PC-9 (cell line): ENCODE measurements at regions of chr2 and their contacts with region 1.

Region 1: GRCh38 chr2:70357684-70358071 is 55.8 kb upstream of the FAM136A start:
- DNase-seq: peak; percentile 65 to 75
- H3K4me3 ChIP-seq: no peak overlapping the region
- H3K27ac ChIP-seq: peak overlapping the region; percentile 70
- H3K4me1 ChIP-seq: peaks cover 60% of the 10 kb centered on the region
- H3K27me3 ChIP-seq: no peaks in the 10 kb centered on the region
- CTCF ChIP-seq: no peak

Region 2: DNA sequence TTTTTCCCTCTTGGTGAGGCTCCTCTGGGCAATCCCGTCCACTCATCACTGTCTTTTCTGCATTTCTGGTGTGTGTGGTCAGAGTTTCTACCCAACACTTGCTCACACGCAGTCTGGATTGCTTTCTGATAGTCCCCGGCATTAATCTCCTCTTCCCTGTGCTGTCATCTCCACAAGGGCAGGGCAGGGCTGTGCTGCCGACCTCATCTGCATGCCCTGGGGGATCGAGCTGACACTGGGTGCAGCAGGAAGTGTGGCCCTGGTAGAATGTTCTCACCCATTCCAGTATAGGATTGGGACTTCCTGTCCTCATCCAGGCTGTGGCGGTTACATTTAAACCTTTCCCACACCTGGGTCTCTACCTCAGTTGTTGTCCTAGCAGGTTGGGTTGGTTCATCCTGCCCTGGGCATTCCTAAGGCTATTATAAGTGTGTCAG is 24.2 kb after region 1 on chr2:
- CTCF ChIA-PET with region 1: no interaction called
- POLR2A ChIA-PET with region 1: interaction called, 3 read pairs
- intact Hi-C with region 1: loop called (anchors 1 kb)
- DNase-seq: peak; percentile 85 to 97
- H3K4me3 ChIP-seq: peak overlapping the region; percentile 34; the same call in 1 of the 2 replicates
- H3K27ac ChIP-seq: peak overlapping the region; percentile 98
- H3K4me1 ChIP-seq: peaks cover 35% of the 10 kb centered on the region
- H3K27me3 ChIP-seq: no peaks in the 10 kb centered on the region
- CTCF ChIP-seq: no peak

Region 3: DNA sequence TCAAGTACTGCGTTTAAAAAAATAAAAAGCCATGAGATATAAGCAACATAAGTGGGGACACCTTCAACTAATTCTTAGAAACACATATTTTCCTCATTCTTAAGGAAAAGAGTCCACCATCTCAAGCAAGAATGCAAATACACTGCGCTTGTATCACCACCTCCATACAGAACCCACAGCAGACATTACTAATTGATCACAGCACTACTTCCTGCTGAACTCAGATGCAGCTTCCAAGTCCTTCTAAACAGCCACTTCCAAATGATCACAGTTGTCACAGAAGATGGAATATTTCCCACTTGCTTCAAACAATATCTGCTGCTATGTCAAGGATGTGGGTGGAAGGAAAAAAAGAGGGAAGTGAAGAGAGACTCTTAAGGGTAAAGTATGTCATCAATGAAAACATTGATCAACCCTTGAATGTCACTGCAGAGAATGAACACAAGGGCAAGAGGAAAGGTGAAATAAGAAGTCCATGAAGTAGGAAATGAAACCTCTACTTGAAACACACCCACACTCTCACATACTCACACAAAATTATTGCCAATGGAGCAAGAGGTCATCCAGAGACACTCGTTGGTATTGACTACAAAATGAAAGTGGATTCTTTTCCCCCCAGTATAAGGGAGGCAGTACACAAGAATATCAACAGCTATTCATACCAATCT is 173.9 kb after region 1 on chr2:
- CTCF ChIA-PET with region 1: no interaction called
- POLR2A ChIA-PET with region 1: no interaction called
- intact Hi-C with region 1: no loop called
- DNase-seq: no peak
- H3K4me3 ChIP-seq: no peak overlapping the region
- H3K27ac ChIP-seq: no peak overlapping the region
- H3K4me1 ChIP-seq: peaks cover 63% of the 10 kb centered on the region
- H3K27me3 ChIP-seq: no peaks in the 10 kb centered on the region
- CTCF ChIP-seq: no peak

Region 4: DNA sequence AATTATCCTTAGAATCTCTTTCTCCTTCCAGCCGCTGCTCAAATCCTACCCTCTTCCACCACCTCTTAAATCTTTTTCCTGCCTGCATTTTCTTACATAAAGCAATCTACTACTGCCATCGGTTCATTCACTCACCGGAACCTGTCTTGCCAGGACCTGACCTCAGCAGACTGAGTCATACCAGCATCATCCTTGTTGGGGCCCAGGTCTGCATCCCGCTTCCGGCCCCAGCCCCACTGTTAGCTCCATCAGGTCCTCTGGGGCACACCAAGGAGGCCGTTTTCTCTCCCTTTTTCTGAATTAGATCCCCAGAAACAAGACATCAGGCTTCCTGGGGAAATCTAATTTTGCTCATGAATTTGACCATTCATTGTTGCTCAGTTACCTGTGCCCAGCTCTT is 238.6 kb after region 1 on chr2:
- CTCF ChIA-PET with region 1: no interaction called
- POLR2A ChIA-PET with region 1: interaction called, 10 read pairs
- intact Hi-C with region 1: no loop called
- DNase-seq: peak; percentile 62 to 83
- H3K4me3 ChIP-seq: peak overlapping the region; percentile 19; the same call in 1 of the 2 replicates
- H3K27ac ChIP-seq: peak overlapping the region; percentile 74
- H3K4me1 ChIP-seq: peaks cover 36% of the 10 kb centered on the region
- H3K27me3 ChIP-seq: no peaks in the 10 kb centered on the region
- CTCF ChIP-seq: no peak